Gastrocnemius medialis (tissue), 4 donors: ENCODE measurements at regions of chr14 and their contacts with region 1.

Region 1: GRCh38 chr14:91780452-91780851 is 48.6 kb upstream of the CATSPERB start:
- DNase-seq: no peak
- ATAC-seq: no peak
- H3K4me3 ChIP-seq: no peak overlapping the region
- H3K27ac ChIP-seq: no peak overlapping the region
- H3K4me1 ChIP-seq: no peaks in the 10 kb centered on the region
- H3K27me3 ChIP-seq: no peaks in the 10 kb centered on the region
- CTCF ChIP-seq: no peak
- POLR2A ChIP-seq: no peak

Region 2: DNA sequence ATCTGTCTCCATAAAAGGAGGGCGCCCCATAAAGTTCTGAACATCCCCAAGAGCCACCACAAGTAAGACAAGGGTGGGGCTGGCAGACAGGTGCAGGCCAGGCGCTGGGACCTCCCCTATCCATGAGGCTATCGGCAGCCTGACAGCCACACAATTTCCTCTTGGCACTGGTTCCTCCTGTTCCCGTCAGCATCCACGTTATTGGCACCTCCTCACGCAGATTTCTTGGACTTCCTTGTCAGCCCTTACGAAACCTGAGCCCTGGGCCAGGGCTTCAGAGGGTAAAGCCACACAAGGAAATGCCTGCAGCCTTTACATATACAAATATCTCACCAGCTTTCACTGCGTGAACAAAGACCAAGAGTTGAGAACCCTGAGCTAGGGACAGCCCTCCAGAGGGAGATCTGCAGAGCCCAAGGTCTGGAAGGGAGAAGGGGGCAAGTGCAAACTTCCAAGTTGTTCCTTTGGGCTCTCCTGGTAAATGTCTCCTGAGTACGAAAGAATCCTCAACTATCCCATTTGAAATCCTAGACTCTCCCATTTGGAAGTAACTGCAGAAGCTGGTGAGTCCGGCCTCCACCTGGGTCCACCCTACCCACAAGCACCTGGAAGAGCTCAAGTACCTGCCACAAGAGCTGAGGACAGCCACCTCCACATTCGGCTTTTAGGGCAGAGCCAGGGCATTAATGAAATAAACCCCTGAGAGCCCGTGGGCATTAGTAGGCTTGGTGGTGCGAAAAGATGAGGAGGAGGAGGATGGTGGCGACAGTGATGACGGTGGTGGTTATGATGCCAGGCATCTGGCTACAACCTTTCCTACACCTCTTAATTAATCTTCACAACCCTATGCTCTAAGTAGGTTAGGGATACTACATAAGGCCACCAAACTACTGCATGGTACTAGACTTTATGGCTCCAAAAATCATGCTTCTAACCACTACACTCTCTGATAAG is 92.3 kb after region 1 on chr14:
- in situ Hi-C with region 1: no loop called
- intact Hi-C with region 1: loop called (anchors 10 kb)
- DNase-seq: peak; percentile 52 to 77
- ATAC-seq: peak; percentile 83 to 85
- H3K4me3 ChIP-seq: no peak overlapping the region
- H3K27ac ChIP-seq: peak overlapping the region; percentile 50 to 60 (median 59)
- H3K4me1 ChIP-seq: peaks cover 7 to 11% of the 10 kb centered on the region in 2 donors
- H3K27me3 ChIP-seq: no peaks in the 10 kb centered on the region
- CTCF ChIP-seq: no peak
- POLR2A ChIP-seq: no peak

Region 3: DNA sequence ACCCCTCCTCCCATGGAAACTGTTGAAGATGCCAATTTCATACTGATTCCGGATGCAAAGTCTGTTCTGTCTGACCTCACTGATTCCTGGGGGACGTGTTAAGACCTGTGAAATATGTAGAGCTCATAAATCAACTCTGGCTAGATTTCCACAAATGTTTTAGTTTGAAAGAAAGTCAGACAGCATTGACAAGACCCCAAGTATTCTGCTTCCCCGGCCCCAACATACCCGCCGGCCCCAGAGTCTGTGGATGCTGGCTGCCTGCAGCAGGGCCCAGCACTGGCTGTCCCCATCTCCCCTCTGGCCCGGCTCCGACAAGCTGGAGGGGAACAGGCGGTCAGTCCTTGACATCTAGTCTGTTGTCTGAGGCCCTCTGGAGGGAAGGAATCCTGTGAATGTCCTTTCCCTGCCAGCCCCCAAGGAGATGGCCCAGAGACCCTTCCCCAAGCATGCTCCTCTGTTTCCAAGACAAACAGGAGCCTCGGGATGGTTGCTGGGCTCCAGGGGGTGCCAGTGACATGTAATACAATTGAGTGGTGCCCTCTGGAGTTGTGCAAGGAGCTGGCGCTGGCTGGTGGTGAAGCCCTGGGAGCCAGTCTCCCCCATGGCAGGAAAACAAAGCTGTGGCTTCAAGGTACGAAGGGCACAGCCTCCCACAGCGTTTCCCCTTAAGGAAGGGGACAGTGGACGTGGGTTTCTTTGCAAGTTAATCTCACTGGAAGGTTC is 144.7 kb after region 1 on chr14:
- in situ Hi-C with region 1: no loop called
- intact Hi-C with region 1: no loop called
- DNase-seq: no peak
- ATAC-seq: no peak
- H3K4me3 ChIP-seq: no peak overlapping the region
- H3K27ac ChIP-seq: no peak overlapping the region
- H3K4me1 ChIP-seq: no peaks in the 10 kb centered on the region
- H3K27me3 ChIP-seq: no peaks in the 10 kb centered on the region
- CTCF ChIP-seq: no peak
- POLR2A ChIP-seq: no peak